IMR-90 (cell line): ENCODE measurements at regions of chr10 and their contacts with region 1.

Region 1: GRCh38 chr10:5047912-5048628 is 44.4 kb upstream of the AKR1C2 start:
- DNase-seq: peak; percentile 37
- ATAC-seq: peak; percentile 66
- H3K4me3 ChIP-seq: no peak overlapping the region
- H3K27ac ChIP-seq: no peak overlapping the region
- H3K4me1 ChIP-seq: no peaks in the 10 kb centered on the region
- H3K27me3 ChIP-seq: no peaks in the 10 kb centered on the region
- CTCF ChIP-seq: no peak
- POLR2A ChIP-seq: no peak
- RAD21 ChIP-seq: no peak

Region 2: DNA sequence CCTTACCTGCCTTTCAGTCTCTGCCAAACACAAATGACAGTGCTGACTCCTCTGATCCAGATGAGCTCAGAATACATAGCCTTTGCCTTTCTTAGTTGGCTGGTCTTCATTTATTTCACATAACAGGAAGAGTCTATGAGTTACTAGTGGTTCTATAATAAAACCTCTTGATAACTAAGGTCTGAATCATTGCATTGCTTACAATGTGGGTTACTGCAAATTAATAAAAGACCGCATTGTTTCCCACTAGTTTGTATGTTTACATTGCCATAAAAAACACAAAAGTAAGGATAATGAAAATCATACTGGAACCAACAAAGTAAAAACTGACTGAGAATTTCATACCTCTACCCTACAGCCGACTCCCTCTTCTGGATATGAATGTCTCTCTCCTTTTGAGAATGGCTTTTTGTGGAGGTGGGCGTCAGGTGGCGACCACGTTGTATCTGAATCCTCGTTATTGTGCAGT is 284.1 kb before region 1 on chr10:
- CTCF ChIA-PET with region 1: no interaction called
- POLR2A ChIA-PET with region 1: no interaction called
- dilution Hi-C with region 1: no loop called
- in situ Hi-C with region 1: no loop called
- intact Hi-C with region 1: no loop called
- DNase-seq: peak; percentile 87
- ATAC-seq: peak; percentile 79
- H3K4me3 ChIP-seq: peak overlapping the region; percentile 27; the same call in 1 of the 2 replicates
- H3K27ac ChIP-seq: peak overlapping the region; percentile 78
- H3K4me1 ChIP-seq: peaks cover 19% of the 10 kb centered on the region
- H3K27me3 ChIP-seq: no peaks in the 10 kb centered on the region
- CTCF ChIP-seq: no peak
- POLR2A ChIP-seq: no peak
- RAD21 ChIP-seq: no peak; the same call in 1 of the 2 replicates

Region 3: DNA sequence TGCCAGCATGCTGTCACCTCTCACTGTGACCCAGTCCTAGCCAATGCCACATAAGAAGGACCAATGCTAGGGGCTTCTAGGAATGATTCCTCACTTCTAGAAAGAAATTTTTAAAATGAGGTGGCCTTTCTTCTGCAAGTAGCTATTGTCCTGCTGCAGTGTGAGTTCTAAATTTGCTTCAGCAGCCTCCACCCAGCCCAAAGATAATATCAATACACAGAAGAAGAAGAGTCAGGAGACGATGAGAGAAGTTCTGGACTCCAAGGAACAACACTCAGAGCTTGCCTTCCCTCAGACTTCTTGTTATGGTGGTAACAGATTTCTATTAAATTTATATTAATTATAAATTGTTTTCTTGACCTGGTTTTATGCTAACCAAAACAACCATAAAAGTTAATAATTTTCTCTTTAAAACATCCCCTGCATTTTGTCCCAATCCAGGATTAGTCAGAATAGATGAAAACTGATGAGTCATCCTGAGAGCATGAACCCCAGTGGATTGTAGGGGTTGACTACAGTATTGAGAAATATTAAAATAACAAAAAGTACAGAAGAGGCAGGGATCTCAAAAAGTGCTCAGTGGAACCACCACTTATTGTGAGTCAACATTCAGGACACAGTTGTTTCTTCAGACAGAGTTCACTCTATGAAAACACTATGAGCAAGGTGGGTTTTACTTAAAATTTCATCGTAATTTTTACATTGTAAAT is 14.9 kb before region 1 on chr10:
- CTCF ChIA-PET with region 1: no interaction called
- POLR2A ChIA-PET with region 1: interaction called, 16 read pairs
- dilution Hi-C with region 1: no loop called
- in situ Hi-C with region 1: no loop called
- intact Hi-C with region 1: no loop called
- DNase-seq: peak; percentile 85
- ATAC-seq: peak; percentile 96
- H3K4me3 ChIP-seq: no peak overlapping the region
- H3K27ac ChIP-seq: peak overlapping the region; percentile 67; the same call in 1 of the 2 replicates
- H3K4me1 ChIP-seq: peaks cover 4% of the 10 kb centered on the region; the same call in 1 of the 2 replicates
- H3K27me3 ChIP-seq: no peaks in the 10 kb centered on the region
- CTCF ChIP-seq: no peak
- POLR2A ChIP-seq: no peak
- RAD21 ChIP-seq: no peak

Region 4: DNA sequence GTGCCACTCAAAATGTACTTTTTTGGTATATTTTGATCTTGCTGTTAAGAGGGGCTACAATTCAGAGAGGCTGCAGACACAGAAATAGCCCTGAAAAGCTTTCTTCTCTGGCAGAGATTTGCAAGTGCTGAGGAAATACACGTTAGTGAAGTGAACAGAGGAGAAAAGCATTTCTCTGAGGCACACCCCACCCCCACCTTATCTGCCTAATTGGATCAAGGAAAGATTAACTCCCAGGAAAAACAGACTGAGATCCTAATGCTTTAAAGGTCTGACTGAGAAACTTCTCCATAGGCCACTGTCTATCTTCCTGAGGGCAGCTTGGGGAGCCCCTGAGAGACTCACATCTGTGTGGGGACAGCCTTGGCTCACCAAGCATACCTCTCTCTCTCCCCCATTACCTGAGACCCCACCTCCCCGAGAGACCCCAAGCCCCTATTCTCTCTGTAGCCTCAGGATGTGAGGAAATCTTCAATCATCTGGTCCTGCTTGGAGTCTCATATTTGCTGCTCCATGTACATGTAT is 31.3 kb after region 1 on chr10:
- CTCF ChIA-PET with region 1: no interaction called
- POLR2A ChIA-PET with region 1: no interaction called
- dilution Hi-C with region 1: no loop called
- in situ Hi-C with region 1: no loop called
- intact Hi-C with region 1: no loop called
- DNase-seq: no peak
- ATAC-seq: no peak
- H3K4me3 ChIP-seq: no peak overlapping the region
- H3K27ac ChIP-seq: no peak overlapping the region
- H3K4me1 ChIP-seq: no peaks in the 10 kb centered on the region
- H3K27me3 ChIP-seq: no peaks in the 10 kb centered on the region
- CTCF ChIP-seq: no peak
- POLR2A ChIP-seq: no peak
- RAD21 ChIP-seq: no peak